GM13976 (cell line): ENCODE measurements at regions of chr1 and their contacts with region 1.

Region 1: DNA sequence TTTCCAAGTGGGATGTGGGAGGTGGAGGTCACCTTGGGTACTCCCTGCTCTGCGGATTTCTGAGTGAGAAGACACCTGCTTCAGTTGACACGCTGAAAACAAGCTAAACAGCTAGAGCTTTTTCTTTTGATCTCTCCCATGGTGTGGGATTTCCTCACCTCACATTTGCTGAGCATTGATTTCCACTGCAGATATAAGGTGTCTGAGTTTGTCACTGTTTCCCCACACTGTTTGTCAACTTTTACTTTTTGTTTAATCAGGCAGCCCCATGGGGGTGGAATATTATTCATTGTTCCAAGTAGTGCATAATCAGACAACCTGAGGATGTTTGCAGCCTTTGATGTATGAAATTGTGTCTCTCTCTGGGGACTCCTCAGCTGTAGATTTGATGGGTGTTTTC is 49.5 kb downstream of the FASLG start:
- DNase-seq: no peak
- CTCF ChIP-seq: no peak

Region 2: DNA sequence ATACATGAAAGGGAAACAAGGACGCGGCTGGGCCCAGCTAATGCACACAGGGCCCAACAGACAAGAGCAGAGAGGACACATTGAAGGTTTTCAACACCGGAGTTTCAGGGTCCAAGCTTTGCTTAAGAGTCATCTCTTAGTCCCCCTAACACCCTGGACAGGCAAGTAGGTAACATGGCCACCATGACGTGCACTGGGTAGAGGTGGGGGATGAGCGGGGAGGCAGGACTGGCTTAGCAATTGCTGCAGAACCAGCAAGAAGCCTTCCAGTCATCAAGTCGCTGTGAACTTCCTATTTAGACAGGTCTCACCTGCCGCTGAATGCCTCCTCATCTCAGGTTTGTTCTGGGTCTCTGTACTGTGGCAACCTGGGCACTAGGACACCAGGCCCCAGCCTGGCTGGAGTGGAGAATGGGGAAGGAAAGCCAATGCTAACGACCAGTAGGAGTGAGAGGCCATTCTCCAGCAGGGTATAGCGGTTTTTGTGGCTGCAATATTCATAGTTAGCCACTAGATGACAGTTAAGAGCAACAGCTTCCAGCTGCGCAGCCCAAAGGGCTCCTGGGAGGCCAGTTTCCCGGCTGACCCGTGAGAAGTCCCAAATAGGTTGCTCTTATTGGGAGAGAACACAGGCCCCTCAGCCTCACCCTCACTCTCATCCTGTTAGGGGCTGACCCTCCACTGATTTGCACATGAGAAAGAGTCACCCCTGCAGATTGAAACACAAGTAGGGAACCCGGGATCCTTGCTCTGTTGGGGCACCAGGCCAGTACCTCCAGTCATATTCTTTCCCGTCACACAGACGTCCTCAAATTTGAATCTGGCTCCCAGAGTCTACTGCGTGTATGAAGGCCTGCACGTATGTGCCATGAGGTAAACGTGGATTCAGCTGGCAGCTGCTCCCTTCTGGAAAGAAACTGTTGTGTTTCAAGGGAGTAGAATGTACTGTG is 258.6 kb before region 1 on chr1:
- in situ Hi-C with region 1: loop called (anchors 10 kb)
- DNase-seq: peak; percentile 66
- CTCF ChIP-seq: peak; percentile 73

Region 3: GRCh38 chr1:172616195-172616970 is 92.1 kb before region 1 on chr1:
- in situ Hi-C with region 1: no loop called
- DNase-seq: no peak
- CTCF ChIP-seq: no peak